ENCODE measurements at regions of chr15 and their contacts with region 1.

Region 1: DNA sequence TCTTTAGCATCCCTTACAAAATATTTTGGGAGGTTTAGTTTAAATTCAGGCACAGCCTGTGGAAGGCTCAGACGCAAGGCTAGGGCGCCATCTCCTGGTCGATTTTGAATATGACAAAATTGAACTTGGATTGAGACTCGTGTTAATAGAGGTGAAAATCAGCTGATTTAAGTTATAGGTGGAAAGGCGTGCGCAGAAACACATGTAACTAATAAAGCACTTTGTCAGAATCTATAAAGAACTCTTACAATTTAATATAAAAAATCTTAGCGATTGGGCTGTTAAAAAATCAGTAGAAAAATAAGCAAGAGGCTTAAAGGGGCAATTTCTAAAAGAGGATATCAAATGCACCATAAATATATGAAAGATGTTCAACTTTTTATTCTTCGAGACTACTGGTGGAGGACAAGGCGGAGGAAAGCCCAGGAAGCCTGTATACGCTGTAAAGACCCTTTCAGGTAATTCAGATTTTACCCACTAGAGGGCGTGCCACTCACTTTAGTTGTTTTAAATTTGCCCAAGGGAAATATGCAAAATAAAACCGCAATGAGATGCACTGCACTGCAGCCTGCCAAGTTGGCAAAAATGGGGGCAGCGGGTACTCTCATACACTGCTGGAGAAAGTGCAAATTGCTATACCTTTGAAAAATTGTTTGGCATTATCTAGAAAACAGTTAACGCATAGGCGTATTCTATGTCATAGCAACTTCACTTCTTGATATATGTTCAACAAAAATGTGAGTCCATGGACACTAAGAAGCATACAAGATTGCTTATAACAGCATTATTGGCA is 64.7 kb downstream of the SLC30A4 start:
- DNase-seq: peak; percentile 66 to 67
- H3K4me3 ChIP-seq: peak overlapping the region; percentile 56
- H3K27ac ChIP-seq: peak overlapping the region; percentile 89
- H3K4me1 ChIP-seq: peaks cover 48% of the 10 kb centered on the region
- H3K27me3 ChIP-seq: no peaks in the 10 kb centered on the region
- CTCF ChIP-seq: peak; percentile 88

Region 2: GRCh38 chr15:45112586-45113379 is 345.1 kb before region 1 on chr15:
- CTCF ChIA-PET with region 1: interaction called, 10 read pairs
- POLR2A ChIA-PET with region 1: no interaction called
- intact Hi-C with region 1: no loop called
- DNase-seq: no peak
- H3K4me3 ChIP-seq: no peak overlapping the region
- H3K27ac ChIP-seq: no peak overlapping the region
- H3K4me1 ChIP-seq: no peaks in the 10 kb centered on the region
- H3K27me3 ChIP-seq: peaks cover 3% of the 10 kb centered on the region; the same call in 1 of the 2 replicates
- CTCF ChIP-seq: no peak

Region 3: GRCh38 chr15:45126535-45127158 is 331.2 kb before region 1 on chr15:
- CTCF ChIA-PET with region 1: no interaction called
- POLR2A ChIA-PET with region 1: no interaction called
- intact Hi-C with region 1: loop called (anchors 1 kb)
- DNase-seq: peak in 1 of 2 experiments; percentile 45
- H3K4me3 ChIP-seq: no peak overlapping the region
- H3K27ac ChIP-seq: no peak overlapping the region
- H3K4me1 ChIP-seq: peaks cover 11% of the 10 kb centered on the region; the same call in 1 of the 2 replicates
- H3K27me3 ChIP-seq: no peaks in the 10 kb centered on the region
- CTCF ChIP-seq: peak; percentile 78

Region 4: GRCh38 chr15:45198337-45199135 is 259.3 kb before region 1 on chr15:
- CTCF ChIA-PET with region 1: no interaction called
- POLR2A ChIA-PET with region 1: no interaction called
- intact Hi-C with region 1: loop called (anchors 2 kb)
- DNase-seq: peak; percentile 88 to 94
- H3K4me3 ChIP-seq: peak overlapping the region; percentile 80
- H3K27ac ChIP-seq: no peak overlapping the region
- H3K4me1 ChIP-seq: no peaks in the 10 kb centered on the region
- H3K27me3 ChIP-seq: no peaks in the 10 kb centered on the region
- CTCF ChIP-seq: peak; percentile 77

Region 5: GRCh38 chr15:45205192-45205591 is 252.6 kb before region 1 on chr15:
- CTCF ChIA-PET with region 1: interaction called, 3 read pairs
- POLR2A ChIA-PET with region 1: no interaction called
- intact Hi-C with region 1: loop called (anchors 1 kb)
- DNase-seq: peak in 1 of 2 experiments; percentile 60
- H3K4me3 ChIP-seq: no peak overlapping the region
- H3K27ac ChIP-seq: no peak overlapping the region
- H3K4me1 ChIP-seq: no peaks in the 10 kb centered on the region
- H3K27me3 ChIP-seq: no peaks in the 10 kb centered on the region
- CTCF ChIP-seq: peak; percentile 76

Region 6: DNA sequence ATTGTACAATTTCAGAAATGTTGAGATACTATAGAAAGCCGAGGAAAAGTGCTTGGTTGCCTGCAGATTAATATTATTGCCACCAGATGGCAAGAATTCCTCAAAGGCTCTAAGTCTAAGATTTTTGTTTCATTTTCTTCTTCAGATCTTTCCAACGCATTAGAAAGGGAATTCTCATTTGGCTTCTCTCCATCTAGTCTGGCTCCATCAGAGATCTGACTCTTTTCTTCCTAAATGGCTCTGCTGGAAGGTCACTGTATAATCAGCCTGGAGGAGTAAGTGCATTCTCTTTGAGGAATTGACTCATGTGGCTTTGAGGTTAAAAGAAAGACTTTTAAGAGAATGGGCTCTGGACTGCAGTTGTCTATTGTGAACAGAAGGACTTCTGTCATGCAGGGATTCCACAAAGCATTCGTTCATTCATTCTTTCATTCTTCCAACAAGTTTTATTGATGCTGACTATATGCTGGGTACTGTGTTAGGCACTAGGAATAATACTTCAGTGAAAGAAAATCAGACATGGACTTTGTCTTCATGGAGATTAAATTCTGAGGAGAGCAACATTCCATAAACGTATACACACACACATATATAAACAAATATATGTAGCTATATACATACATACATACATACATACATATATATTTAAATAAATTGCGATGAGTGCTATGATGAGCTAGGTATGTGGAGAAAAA is 150.5 kb before region 1 on chr15:
- CTCF ChIA-PET with region 1: no interaction called
- POLR2A ChIA-PET with region 1: no interaction called
- intact Hi-C with region 1: loop called (anchors 5 kb)
- DNase-seq: peak; percentile 3 to 40
- H3K4me3 ChIP-seq: no peak overlapping the region; the same call in 1 of the 2 replicates
- H3K27ac ChIP-seq: no peak overlapping the region
- H3K4me1 ChIP-seq: no peaks in the 10 kb centered on the region
- H3K27me3 ChIP-seq: no peaks in the 10 kb centered on the region
- CTCF ChIP-seq: peak; percentile 59

Region 7: DNA sequence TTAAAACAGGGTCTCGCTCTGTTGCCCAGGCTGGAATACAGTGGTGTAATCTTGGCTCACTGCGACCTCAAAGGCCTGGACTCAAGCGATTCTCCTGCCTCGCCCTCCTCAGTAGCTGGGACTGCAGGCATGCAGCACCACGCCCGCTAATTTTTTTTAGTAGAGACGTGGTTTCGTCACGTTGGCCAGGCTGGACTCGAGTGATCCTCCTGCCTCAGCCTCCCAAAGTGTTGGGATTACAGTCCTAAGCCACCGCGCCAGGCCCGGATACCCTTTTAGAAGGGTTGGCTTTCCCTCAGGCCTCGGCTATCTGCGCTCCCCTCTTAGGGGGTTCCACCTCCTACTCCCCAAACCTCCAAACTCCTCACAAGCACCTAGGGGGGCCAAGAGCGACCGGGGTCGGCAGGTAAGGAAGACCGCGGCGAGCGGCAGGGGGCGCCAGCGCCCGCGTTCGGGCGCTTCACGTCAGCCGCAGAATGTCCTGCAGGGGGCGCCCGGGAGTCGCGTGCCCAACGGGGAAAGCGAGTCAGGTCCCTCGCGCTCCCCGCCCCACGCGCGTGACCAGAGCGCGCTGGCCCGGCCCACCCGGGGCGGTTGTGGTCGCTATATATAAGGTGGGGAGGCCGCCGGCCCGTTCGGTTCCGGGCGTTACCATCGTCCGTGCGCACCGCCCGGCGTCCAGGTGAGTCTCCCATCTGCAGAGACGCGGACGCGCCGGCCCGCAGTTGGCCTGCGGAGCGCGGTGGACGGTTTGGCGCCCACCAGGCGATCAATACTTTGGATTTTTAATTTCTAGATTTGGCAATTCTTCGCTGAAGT is 27.7 kb before region 1 on chr15:
- CTCF ChIA-PET with region 1: interaction called, 12 read pairs
- POLR2A ChIA-PET with region 1: interaction called, 3 read pairs
- intact Hi-C with region 1: loop called (anchors 1 kb)
- DNase-seq: peak in 1 of 2 experiments; percentile 74
- H3K4me3 ChIP-seq: peak overlapping the region; percentile 51; the same call in 1 of the 2 replicates
- H3K27ac ChIP-seq: no peak overlapping the region
- H3K4me1 ChIP-seq: peaks cover 11% of the 10 kb centered on the region
- H3K27me3 ChIP-seq: no peaks in the 10 kb centered on the region
- CTCF ChIP-seq: peak; percentile 99

Region 8: GRCh38 chr15:45884755-45885445 is 427.1 kb after region 1 on chr15:
- CTCF ChIA-PET with region 1: no interaction called
- POLR2A ChIA-PET with region 1: no interaction called
- intact Hi-C with region 1: no loop called
- DNase-seq: no peak
- H3K4me3 ChIP-seq: no peak overlapping the region
- H3K27ac ChIP-seq: no peak overlapping the region
- H3K4me1 ChIP-seq: no peaks in the 10 kb centered on the region
- H3K27me3 ChIP-seq: no peaks in the 10 kb centered on the region
- CTCF ChIP-seq: no peak